Activated CD4-positive, alpha-beta memory T cell treated with anti-CD3 and anti-CD28 coated beads for 36 hours (primary cell): ENCODE measurements at regions of chr10 and their contacts with region 1.

Region 1: DNA sequence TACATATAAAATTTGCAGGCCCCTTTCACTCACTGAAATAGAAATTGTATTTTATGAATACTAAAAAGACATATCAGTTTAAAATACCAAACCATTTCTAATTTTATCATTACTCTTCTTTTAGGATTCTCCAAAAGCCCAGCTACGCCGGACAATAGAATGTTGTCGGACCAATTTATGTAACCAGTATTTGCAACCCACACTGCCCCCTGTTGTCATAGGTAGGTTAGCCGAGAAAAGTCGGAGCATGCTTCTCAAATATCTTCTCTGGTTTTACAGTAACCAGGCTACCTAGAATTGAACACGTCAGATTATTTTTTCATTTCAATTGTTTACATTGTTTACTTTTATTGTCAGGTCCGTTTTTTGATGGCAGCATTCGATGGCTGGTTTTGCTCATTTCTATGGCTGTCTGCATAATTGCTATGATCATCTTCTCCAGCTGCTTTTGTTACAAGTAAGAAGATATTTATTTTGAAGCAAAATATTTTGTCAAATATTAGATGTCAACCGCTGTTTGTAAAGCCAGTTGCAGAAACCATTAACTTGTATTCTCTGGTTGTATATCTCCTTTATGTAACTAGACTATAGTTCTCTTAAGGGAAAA is 57.6 kb downstream of the MMRN2 start:
- DNase-seq: peak; percentile 44
- H3K4me3 Mint-ChIP-seq: no peak overlapping the region
- H3K27ac Mint-ChIP-seq: no peak overlapping the region
- H3K4me1 Mint-ChIP-seq: no peaks in the 10 kb centered on the region
- H3K27me3 Mint-ChIP-seq: no peaks in the 10 kb centered on the region

Region 2: GRCh38 chr10:86688398-86688921 is 211.3 kb before region 1 on chr10:
- CTCF ChIA-PET with region 1: interaction called, 38 read pairs
- POLR2A ChIA-PET with region 1: no interaction called
- intact Hi-C with region 1: loop called (anchors 1 kb)
- DNase-seq: peak; percentile 71
- H3K4me3 Mint-ChIP-seq: no peak overlapping the region
- H3K27ac Mint-ChIP-seq: no peak overlapping the region
- H3K4me1 Mint-ChIP-seq: no peaks in the 10 kb centered on the region
- H3K27me3 Mint-ChIP-seq: peaks cover 2% of the 10 kb centered on the region

Region 3: DNA sequence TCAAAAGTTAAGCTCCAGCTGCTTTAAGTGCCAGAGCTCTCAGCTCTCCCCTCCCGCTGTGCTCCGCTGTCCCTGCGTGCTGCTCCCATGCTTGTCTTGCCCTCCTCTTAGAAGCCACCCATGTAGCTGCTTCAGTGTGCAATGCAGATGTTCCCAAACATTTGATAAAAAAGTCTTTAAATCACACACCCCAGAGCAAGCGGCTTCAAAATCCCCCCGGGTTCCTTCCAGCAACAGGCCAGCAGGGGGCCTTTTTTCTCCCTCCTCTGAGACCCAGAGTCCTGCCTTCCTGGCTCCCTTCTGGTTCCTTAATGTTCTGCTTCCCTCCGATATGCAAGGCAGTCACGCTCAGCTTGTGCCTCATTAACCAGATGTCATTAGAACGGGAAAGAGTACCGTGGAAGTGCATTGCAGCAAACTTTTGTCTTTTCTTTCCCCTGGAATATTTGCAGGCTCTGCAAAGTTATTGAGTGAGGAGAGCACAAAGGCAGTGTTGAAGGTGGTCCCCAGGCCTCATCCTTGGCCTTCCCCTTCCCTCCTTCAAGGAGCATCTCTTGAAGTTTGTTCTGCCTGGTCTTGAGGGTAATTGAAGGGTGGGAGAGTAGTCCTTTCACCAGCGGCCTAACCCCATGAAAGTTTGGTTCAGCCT is 205.9 kb before region 1 on chr10:
- CTCF ChIA-PET with region 1: interaction called, 38 read pairs
- POLR2A ChIA-PET with region 1: no interaction called
- intact Hi-C with region 1: loop called (anchors 1 kb)
- DNase-seq: peak; percentile 46
- H3K4me3 Mint-ChIP-seq: no peak overlapping the region
- H3K27ac Mint-ChIP-seq: no peak overlapping the region
- H3K4me1 Mint-ChIP-seq: no peaks in the 10 kb centered on the region
- H3K27me3 Mint-ChIP-seq: no peaks in the 10 kb centered on the region

Region 4: GRCh38 chr10:86710987-86711512 is 188.7 kb before region 1 on chr10:
- CTCF ChIA-PET with region 1: interaction called, 5 read pairs
- POLR2A ChIA-PET with region 1: no interaction called
- intact Hi-C with region 1: loop called (anchors 1 kb)
- DNase-seq: peak; percentile 89
- H3K4me3 Mint-ChIP-seq: peak overlapping the region; percentile 75
- H3K27ac Mint-ChIP-seq: peak overlapping the region; percentile 89
- H3K4me1 Mint-ChIP-seq: peaks cover 11% of the 10 kb centered on the region
- H3K27me3 Mint-ChIP-seq: no peaks in the 10 kb centered on the region

Region 5: GRCh38 chr10:86878983-86879713 is 20.6 kb before region 1 on chr10:
- CTCF ChIA-PET with region 1: no interaction called
- POLR2A ChIA-PET with region 1: no interaction called
- intact Hi-C with region 1: loop called (anchors 1 kb)
- DNase-seq: no peak
- H3K4me3 Mint-ChIP-seq: no peak overlapping the region
- H3K27ac Mint-ChIP-seq: no peak overlapping the region
- H3K4me1 Mint-ChIP-seq: no peaks in the 10 kb centered on the region
- H3K27me3 Mint-ChIP-seq: no peaks in the 10 kb centered on the region

Region 6: DNA sequence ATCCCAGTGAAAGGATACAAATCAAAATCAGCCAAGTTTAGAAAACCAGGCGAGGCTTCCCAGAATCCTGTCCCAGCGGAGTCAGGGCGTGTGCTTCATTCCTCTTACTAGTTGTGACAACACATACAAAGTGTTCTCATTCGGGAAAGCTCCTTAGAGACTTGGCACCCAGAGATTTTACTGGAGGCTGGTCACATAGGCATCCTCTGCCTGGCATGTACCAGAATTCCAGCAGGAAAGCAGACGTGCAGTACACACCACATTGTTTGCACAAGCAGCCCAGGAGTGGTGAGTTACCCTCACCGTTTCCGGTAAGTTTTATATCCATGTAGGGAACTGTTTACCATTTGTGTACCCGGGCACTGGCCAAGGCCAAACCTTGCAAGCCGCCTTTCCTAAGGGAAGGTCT is 22.8 kb after region 1 on chr10:
- CTCF ChIA-PET with region 1: no interaction called
- POLR2A ChIA-PET with region 1: no interaction called
- intact Hi-C with region 1: no loop called
- DNase-seq: no peak
- H3K4me3 Mint-ChIP-seq: no peak overlapping the region
- H3K27ac Mint-ChIP-seq: no peak overlapping the region
- H3K4me1 Mint-ChIP-seq: no peaks in the 10 kb centered on the region
- H3K27me3 Mint-ChIP-seq: no peaks in the 10 kb centered on the region